Activated naive CD4-positive, alpha-beta T cell treated with anti-CD3 and anti-CD28 coated beads for 36 hours (primary cell): ENCODE measurements at regions of chr4 and their contacts with region 1.

Region 1: GRCh38 chr4:81351654-81352445 is 119.9 kb downstream of the RASGEF1B start:
- DNase-seq: peak; percentile 82
- H3K4me3 Mint-ChIP-seq: no peak overlapping the region
- H3K27ac Mint-ChIP-seq: no peak overlapping the region
- H3K4me1 Mint-ChIP-seq: no peaks in the 10 kb centered on the region
- H3K27me3 Mint-ChIP-seq: peaks cover 16% of the 10 kb centered on the region

Region 2: DNA sequence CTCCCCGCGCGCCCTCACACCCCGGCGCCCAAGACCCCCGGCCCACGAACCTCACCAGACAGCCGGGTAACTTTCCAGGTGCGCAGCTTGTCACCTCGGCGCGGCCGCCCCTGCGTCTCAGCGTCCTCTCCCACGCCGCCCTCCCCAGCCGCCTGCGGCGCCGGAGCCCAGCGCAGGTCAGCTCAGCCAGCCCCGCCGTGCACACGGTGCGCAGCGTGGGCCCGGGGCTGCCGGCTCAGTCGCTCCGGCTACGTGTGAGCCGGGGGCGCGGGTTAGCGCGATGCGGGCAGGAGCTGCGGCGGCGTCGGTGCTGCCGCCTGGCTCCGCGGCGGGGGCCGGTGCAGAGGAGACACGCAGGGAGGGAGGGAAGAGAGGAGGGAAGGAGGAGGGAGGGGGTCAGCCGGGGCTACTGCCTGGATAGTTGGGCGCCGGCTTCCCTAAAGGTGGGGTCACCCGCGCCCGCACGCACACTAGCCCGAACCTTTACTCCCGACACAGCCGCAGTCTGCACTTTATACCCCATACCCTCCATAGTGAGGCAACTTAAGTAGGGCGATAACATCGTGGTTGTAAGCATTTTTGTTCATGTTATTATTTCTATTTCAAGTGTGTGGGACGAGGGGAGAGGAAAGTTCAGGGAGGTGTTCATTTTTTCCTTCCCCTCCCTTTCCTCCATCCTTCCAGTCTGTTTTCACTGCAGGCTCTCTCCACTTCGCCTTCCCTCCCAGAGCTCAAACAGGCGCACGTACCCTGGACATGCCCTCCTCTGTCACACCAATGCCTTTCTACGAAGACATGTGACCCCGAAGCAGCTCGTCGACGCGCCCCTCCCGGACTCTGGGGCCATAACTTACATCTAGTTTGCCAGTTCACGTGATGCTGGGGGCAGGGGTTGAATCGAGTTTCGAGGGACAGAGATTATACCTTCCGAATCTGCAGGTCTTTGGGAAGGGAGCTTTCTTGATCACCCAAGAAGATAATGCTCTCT is 136.7 kb before region 1 on chr4 and contains the start of gene PRKG2:
- CTCF ChIA-PET with region 1: no interaction called
- intact Hi-C with region 1: loop called (anchors 5 kb)
- DNase-seq: no peak
- H3K4me3 Mint-ChIP-seq: peak within 1 kb of the TSS; percentile 57
- H3K27ac Mint-ChIP-seq: no peak within 1 kb of the TSS
- H3K4me1 Mint-ChIP-seq: peaks cover 13% of the 10 kb centered on the region
- H3K27me3 Mint-ChIP-seq: peaks cover 49% of the 10 kb centered on the region
- total RNA-seq, gene PRKG2: 0.30 to 1.2 TPM

Region 3: DNA sequence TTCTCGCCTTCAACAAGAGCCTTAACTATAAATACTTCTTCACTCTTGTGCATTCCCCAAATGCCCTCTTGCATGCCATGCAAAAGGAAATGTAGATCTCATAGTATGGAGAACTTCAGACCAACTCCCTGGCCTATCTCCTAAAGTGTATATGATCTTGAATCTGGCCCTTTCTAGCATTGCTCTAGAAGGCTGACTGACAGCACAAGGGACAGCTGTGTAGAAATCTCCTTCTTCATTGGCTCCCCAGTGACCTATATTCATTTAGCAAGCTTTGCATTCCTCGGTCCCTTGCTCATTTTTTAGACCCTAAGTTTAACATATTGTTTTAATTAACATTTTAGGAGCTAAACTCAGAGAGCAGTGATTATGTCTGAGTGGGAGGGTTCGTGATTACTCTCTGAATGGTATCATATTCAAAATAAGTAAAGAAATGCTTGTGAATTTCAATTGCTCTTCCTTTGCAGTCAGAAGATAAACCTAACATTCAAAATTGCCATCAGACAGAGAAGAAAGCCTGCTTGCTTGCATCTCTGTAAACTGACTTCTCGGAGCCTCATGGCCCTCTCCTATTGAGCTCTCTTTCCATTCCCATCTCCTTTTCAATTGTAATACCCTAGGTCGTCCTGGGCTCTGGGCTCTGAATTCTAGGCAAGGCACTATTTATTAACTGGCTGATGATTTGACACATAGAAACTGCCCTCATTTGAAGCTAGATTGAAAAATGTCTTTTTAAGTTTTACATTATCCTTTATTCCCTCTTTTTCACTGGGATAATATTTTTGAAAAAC is 16.5 kb before region 1 on chr4:
- CTCF ChIA-PET with region 1: interaction called, 18 read pairs
- intact Hi-C with region 1: no loop called
- DNase-seq: no peak
- H3K4me3 Mint-ChIP-seq: no peak overlapping the region
- H3K27ac Mint-ChIP-seq: no peak overlapping the region
- H3K4me1 Mint-ChIP-seq: no peaks in the 10 kb centered on the region
- H3K27me3 Mint-ChIP-seq: no peaks in the 10 kb centered on the region